Prostate gland (tissue), 2 donors: ENCODE measurements at regions of chr20 and their contacts with region 1.

Region 1: GRCh38 chr20:38229376-38230252 is 30.9 kb downstream of the KIAA1755 start:
- DNase-seq: no peak
- H3K4me3 ChIP-seq: no peak overlapping the region
- H3K27ac ChIP-seq: no peak overlapping the region
- H3K4me1 ChIP-seq: no peaks in the 10 kb centered on the region
- H3K27me3 ChIP-seq: no peaks in the 10 kb centered on the region
- CTCF ChIP-seq: peak; percentile 20 to 62 (median 53)
- POLR2A ChIP-seq: no peak

Region 2: DNA sequence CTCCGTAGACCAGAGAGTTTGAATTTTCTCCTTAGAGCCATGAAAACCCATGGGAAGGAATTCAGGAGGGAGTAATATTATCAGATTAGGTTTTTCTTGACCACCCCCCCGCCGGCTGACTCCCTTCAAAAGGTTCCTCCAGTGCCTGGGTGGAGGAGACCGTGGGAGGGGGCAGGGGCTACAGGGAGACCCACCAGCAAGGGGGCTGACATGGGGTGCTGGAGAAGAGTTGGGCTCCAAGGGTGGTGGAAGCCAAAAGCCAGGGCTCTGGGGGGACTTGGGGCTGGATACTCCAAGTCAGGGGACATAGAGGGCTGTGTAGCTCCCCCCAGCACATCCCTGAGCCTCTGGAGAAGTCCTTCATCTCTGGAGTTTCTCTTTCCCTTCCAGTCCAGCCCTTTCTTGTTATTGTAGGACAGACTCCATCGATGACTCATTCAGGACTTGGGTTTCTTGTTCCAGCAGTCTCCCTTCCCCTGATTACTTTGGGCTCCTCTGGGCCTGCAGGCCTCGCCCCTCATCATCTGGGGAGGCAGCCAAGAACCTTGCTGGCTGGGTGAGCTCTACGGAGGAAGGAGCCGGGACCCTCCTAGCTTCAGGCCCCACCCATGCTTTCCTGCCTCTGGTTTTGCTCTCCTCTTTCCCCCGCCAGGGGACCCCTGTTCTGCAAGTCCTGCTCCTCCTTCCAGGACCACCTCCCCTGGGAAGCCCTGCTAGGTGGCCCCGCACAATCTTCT is 41.4 kb after region 1 on chr20:
- intact Hi-C with region 1: no loop called
- DNase-seq: no peak
- H3K4me3 ChIP-seq: no peak overlapping the region
- H3K27ac ChIP-seq: peak overlapping the region; percentile 41 to 51
- H3K4me1 ChIP-seq: no peaks in the 10 kb centered on the region
- H3K27me3 ChIP-seq: no peaks in the 10 kb centered on the region
- CTCF ChIP-seq: no peak
- POLR2A ChIP-seq: no peak

Region 3: GRCh38 chr20:38304845-38305447 is 75.3 kb after region 1 on chr20:
- intact Hi-C with region 1: loop called (anchors 2 kb)
- DNase-seq: no peak
- H3K4me3 ChIP-seq: no peak overlapping the region
- H3K27ac ChIP-seq: no peak overlapping the region
- H3K4me1 ChIP-seq: no peaks in the 10 kb centered on the region
- H3K27me3 ChIP-seq: no peaks in the 10 kb centered on the region
- CTCF ChIP-seq: peak in 3 of 4 experiments; percentile 16 to 48 (median 24)
- POLR2A ChIP-seq: no peak

Region 4: GRCh38 chr20:38395165-38395564 is 165.6 kb after region 1 on chr20:
- intact Hi-C with region 1: loop called (anchors 10 kb)
- DNase-seq: no peak
- H3K4me3 ChIP-seq: no peak overlapping the region
- H3K27ac ChIP-seq: no peak overlapping the region
- H3K4me1 ChIP-seq: no peaks in the 10 kb centered on the region
- H3K27me3 ChIP-seq: no peaks in the 10 kb centered on the region
- CTCF ChIP-seq: no peak
- POLR2A ChIP-seq: no peak